Right ventricle myocardium inferior (tissue), 1 donor: ENCODE measurements at regions of chr15 and their contacts with region 1.

Region 1: DNA sequence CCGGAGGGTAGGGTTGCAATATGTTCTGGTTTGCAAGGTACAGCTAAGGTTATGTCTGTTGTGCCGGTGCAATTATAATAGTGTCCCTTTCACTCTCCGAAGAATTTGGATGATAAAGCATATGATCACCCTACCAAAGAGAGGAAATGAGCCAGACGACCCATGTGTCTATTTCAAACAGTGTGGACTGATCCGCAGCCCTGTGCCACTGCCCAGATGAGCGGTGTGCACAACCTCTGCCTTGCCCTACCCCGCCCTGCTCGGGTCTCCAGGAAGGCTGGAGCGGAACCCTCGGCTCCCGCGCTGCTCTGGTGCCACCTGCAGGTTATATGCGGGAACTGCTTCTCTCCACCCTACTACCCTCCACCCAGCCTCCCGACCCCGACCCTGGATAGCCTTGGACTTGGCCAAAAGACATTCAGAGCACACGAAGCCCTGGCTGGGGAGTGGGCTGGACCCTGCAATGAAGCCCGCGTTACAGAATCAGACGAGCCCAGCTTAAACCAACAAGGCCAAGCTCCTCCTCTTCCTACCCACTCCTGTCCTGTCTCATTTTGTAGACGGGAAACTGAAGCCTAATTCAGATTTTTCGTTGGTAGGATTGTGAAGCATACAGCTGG is 68.4 kb upstream of the CHRNB4 start:
- DNase-seq: peak; percentile 82
- ATAC-seq: peak; percentile 92

Region 2: GRCh38 chr15:78618490-78618934 is 90.9 kb before region 1 on chr15:
- intact Hi-C with region 1: loop called (anchors 1 kb)
- DNase-seq: peak; percentile 81
- ATAC-seq: peak; percentile 78

Region 3: DNA sequence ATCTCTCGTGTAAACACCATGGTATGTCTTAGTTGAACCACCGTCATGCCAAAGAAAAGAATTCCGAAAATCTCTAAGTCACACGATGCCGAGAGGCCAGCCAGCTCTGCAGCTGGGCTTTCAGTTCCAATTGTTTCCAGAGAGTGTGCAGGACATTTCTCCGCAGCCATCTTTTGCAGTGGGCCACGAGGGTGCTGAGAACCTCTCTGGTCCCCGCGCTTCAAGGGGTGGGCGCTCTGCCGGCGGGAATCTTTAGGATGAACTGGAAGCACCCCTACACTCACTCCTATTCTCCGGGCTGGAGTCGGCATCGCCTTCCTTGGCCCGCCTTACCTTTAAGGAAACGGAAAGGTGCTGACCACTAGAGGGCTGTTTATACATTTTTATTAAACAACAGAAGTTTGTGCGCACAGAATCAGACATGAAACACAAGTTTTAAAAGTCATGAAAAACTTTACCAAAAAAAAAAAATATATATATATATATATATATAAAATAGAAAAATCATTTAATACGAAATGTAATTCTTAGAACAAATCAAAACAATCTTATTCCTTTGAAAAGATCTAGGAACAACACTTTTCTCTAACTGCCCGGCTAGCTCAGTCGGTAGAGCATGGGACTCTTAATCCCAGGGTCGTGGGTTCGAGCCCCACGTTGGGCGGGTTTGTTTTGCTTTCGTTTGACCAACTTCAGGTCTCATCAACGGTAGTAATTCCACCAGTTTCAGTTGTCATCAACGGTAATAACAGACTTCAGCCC is 150.8 kb after region 1 on chr15:
- intact Hi-C with region 1: no loop called
- DNase-seq: peak; percentile 79
- ATAC-seq: peak; percentile 92